ENCODE measurements at regions of chr19 and their contacts with region 1.

Region 1: GRCh38 chr19:14890643-14891379 is 4.9 kb upstream of the OR7A17 start:
- DNase-seq: no peak
- ATAC-seq: no peak
- H3K4me3 ChIP-seq: no peak overlapping the region
- H3K27ac ChIP-seq: no peak overlapping the region
- H3K4me1 ChIP-seq: no peaks in the 10 kb centered on the region
- H3K27me3 ChIP-seq: no peaks in the 10 kb centered on the region
- CTCF ChIP-seq: no peak
- EP300 ChIP-seq: no peak
- POLR2A ChIP-seq: no peak
- RAD21 ChIP-seq: no peak

Region 2: GRCh38 chr19:14571695-14572490 is 318.9 kb before region 1 on chr19 and contains the start of gene NDUFB7:
- CTCF ChIA-PET with region 1: interaction called, 7 read pairs
- POLR2A ChIA-PET with region 1: no interaction called
- in situ Hi-C with region 1: no loop called
- intact Hi-C with region 1: loop called (anchors 2 kb)
- DNase-seq: peak; percentile 92
- ATAC-seq: peak; percentile 95
- H3K4me3 ChIP-seq: peak within 1 kb of the TSS; percentile 81 to 99 (median 94)
- H3K27ac ChIP-seq: peak within 1 kb of the TSS; percentile 54
- H3K4me1 ChIP-seq: peaks cover 50% of the 10 kb centered on the region
- H3K27me3 ChIP-seq: no peaks in the 10 kb centered on the region; a peak in 1 of 5 replicates
- CTCF ChIP-seq: peak; percentile 97
- EP300 ChIP-seq: peak in 1 of 2 experiments; percentile 44; a peak in 1 of 4 replicates
- POLR2A ChIP-seq: peak; percentile 85 to 91
- RAD21 ChIP-seq: peak; percentile 33; the same call in 1 of the 2 replicates
- total RNA-seq, gene NDUFB7: 198 and 244 TPM in 2 replicates

Region 3: GRCh38 chr19:14786421-14786851 is 104.4 kb before region 1 on chr19:
- CTCF ChIA-PET with region 1: interaction called, 3 read pairs
- POLR2A ChIA-PET with region 1: no interaction called
- in situ Hi-C with region 1: loop called (anchors 10 kb)
- intact Hi-C with region 1: loop called (anchors 2 kb)
- DNase-seq: no peak
- ATAC-seq: peak; percentile 63
- H3K4me3 ChIP-seq: no peak overlapping the region
- H3K27ac ChIP-seq: no peak overlapping the region
- H3K4me1 ChIP-seq: no peaks in the 10 kb centered on the region
- H3K27me3 ChIP-seq: no peaks in the 10 kb centered on the region; a peak in 2 of 5 replicates
- CTCF ChIP-seq: peak; percentile 86
- EP300 ChIP-seq: no peak
- POLR2A ChIP-seq: no peak
- RAD21 ChIP-seq: peak; percentile 44; the same call in 1 of the 2 replicates